Activated CD8-positive, alpha-beta T cell treated with anti-CD3 and anti-CD28 coated beads for 36 hours (primary cell): ENCODE measurements at regions of chr2 and their contacts with region 1.

Region 1: GRCh38 chr2:219997341-219997851 is 370.0 kb downstream of the SLC4A3 start:
- DNase-seq: peak; percentile 35
- ATAC-seq: no peak
- H3K4me3 Mint-ChIP-seq: no peak overlapping the region
- H3K27ac Mint-ChIP-seq: no peak overlapping the region
- H3K4me1 Mint-ChIP-seq: no peaks in the 10 kb centered on the region
- H3K27me3 Mint-ChIP-seq: peaks cover 2% of the 10 kb centered on the region
- CTCF ChIP-seq: no peak

Region 2: DNA sequence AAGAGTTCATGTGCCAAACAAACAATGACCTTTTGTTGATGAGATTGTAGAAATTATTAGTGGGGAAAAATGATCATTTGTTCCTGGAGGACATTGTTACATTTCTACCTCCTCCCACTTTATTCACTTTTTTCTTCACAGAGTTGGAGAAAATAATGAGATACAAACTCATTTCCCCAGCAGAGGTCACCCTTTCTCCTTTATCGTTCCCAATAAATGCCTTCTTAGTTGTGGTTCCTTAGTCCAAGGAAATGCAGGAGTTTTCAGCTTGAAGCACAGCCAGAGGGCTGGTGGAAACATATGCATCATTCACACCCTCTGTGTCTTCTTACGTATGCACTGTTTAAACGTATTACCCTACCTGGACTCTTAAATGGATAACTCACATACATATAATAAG is 261.2 kb before region 1 on chr2:
- CTCF ChIA-PET with region 1: no interaction called
- POLR2A ChIA-PET with region 1: no interaction called
- intact Hi-C with region 1: loop called (anchors 10 kb)
- DNase-seq: no peak
- ATAC-seq: no peak
- H3K4me3 Mint-ChIP-seq: no peak overlapping the region
- H3K27ac Mint-ChIP-seq: no peak overlapping the region
- H3K4me1 Mint-ChIP-seq: no peaks in the 10 kb centered on the region
- H3K27me3 Mint-ChIP-seq: peaks cover 13% of the 10 kb centered on the region
- CTCF ChIP-seq: peak; percentile 38

Region 3: DNA sequence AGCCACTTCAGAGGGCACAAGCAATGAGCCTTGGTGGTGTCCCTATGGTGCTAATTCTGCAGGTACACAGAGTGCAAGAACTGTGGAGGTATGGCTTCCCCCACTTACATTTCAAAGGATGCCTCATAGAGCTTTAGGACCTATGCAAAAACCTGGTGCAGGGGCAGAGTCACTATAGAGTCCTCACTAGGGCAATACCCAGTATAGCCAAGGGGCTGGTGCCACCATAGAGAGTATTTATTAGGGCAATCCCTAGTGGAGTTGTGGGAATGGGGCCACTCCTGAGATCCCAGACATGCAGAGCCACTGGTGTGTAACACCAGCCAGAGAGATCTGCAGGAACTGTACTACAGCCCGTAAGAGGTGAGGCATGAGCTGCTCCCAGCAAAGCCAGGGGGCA is 57.7 kb before region 1 on chr2:
- CTCF ChIA-PET with region 1: no interaction called
- POLR2A ChIA-PET with region 1: no interaction called
- intact Hi-C with region 1: no loop called
- DNase-seq: no peak
- ATAC-seq: no peak
- H3K4me3 Mint-ChIP-seq: no peak overlapping the region
- H3K27ac Mint-ChIP-seq: no peak overlapping the region
- H3K4me1 Mint-ChIP-seq: no peaks in the 10 kb centered on the region
- H3K27me3 Mint-ChIP-seq: peaks cover 2% of the 10 kb centered on the region
- CTCF ChIP-seq: no peak